Motor neuron (in vitro differentiated cells): ENCODE measurements at regions of chr16 and their contacts with region 1.

Region 1: DNA sequence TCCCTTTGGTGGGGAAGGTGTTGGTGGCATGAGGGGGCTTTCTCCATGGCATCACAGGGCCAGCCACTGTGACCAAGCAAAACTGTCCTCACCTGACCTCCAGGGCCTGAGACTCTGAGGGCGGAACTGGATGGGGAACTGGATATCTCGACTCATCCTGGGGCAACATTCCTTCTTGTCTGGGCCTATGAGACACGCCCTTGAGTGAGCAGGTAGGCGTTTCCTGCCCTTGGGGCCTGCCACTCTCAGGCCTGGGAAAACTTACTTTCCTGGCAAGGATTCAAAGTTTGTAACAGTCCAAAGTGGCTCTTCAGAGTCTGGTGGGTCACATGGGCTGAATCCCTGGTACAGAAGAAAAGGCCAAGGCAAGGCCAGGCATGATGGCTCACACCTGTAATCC is 9.6 kb downstream of the MT1X start:
- ATAC-seq: peak in 3 of 8 experiments; percentile 43 to 77 (median 72)
- H3K4me3 ChIP-seq: no peak overlapping the region
- H3K27ac ChIP-seq: no peak overlapping the region
- H3K4me1 ChIP-seq: no peaks in the 10 kb centered on the region

Region 2: GRCh38 chr16:56576585-56577293 is 115.1 kb before region 1 on chr16:
- in situ Hi-C with region 1: loop called in 1 of 9 experiments (anchors 10 kb)
- ATAC-seq: peak in 4 of 8 experiments; percentile 17 to 99 (median 98)
- H3K4me3 ChIP-seq: no peak overlapping the region
- H3K27ac ChIP-seq: no peak overlapping the region
- H3K4me1 ChIP-seq: no peaks in the 10 kb centered on the region